GM12878 (cell line): ENCODE measurements at regions of chr7 and their contacts with region 1.

Region 1: GRCh38 chr7:34759452-34760125 is 101.6 kb downstream of the NPSR1 start:
- DNase-seq: no peak
- ATAC-seq: no peak
- H3K4me3 ChIP-seq: no peak overlapping the region
- H3K27ac ChIP-seq: no peak overlapping the region
- H3K4me1 ChIP-seq: no peaks in the 10 kb centered on the region
- H3K27me3 ChIP-seq: no peaks in the 10 kb centered on the region
- CTCF ChIP-seq: peak; percentile 55 to 57 (median 56); a peak in 5 of 6 replicates
- EP300 ChIP-seq: no peak
- POLR2A ChIP-seq: no peak
- RAD21 ChIP-seq: peak; percentile 32; the same call in 1 of the 2 replicates

Region 2: DNA sequence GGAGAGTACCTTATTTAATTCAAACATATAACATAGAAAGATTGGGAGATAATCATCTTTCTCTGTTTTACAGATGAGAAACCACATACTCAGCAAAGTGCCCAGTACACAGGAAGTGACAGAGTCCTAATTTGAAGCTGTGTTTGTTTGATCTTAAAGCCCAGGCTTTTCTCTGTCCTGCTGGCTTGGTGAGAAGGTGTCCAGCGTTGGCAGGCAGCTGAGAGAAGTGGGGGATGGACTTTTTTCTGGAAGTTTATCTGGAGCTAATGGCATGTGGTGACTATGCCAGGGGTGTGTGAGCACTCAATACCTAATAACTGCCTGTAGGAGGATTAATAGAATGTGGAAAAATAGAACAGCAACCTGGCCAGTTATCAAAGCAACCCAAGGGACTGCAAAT is 40.7 kb before region 1 on chr7:
- CTCF ChIA-PET with region 1: interaction called, 9 read pairs
- POLR2A ChIA-PET with region 1: interaction called, 36 read pairs
- RAD21 ChIA-PET with region 1: interaction called, 362 read pairs
- SMC1A ChIA-PET with region 1: interaction called, 24 read pairs
- in situ Hi-C with region 1: no loop called
- intact Hi-C with region 1: no loop called
- DNase-seq: no peak
- ATAC-seq: peak; percentile 91
- H3K4me3 ChIP-seq: no peak overlapping the region
- H3K27ac ChIP-seq: no peak overlapping the region
- H3K4me1 ChIP-seq: no peaks in the 10 kb centered on the region
- H3K27me3 ChIP-seq: no peaks in the 10 kb centered on the region
- CTCF ChIP-seq: no peak
- EP300 ChIP-seq: no peak
- POLR2A ChIP-seq: no peak
- RAD21 ChIP-seq: no peak

Region 3: DNA sequence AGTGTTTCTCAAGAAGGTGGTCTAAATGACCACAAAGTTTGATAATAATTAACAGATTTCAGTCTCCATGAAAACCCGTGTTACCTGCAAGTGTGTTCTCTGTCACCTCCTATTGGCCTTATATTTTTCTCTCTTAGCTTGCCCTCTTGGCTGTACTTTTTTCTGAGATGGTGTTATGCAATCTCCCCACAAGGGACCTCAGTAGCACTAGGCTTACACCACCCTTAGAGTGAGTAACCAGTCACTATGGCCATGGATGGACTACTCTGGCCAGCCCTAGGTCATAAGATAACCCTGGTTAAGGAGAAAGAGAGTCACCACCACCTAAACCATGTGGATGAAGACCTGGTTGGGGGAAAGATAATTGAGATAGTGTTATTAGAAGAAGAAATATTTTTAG is 24.8 kb before region 1 on chr7:
- CTCF ChIA-PET with region 1: interaction called, 92 read pairs
- POLR2A ChIA-PET with region 1: interaction called, 31 read pairs
- RAD21 ChIA-PET with region 1: interaction called, 362 read pairs
- SMC1A ChIA-PET with region 1: interaction called, 107 read pairs
- in situ Hi-C with region 1: no loop called
- intact Hi-C with region 1: loop called (anchors 1 kb)
- DNase-seq: no peak
- ATAC-seq: peak; percentile 51
- H3K4me3 ChIP-seq: no peak overlapping the region
- H3K27ac ChIP-seq: no peak overlapping the region
- H3K4me1 ChIP-seq: no peaks in the 10 kb centered on the region
- H3K27me3 ChIP-seq: no peaks in the 10 kb centered on the region
- CTCF ChIP-seq: no peak
- EP300 ChIP-seq: no peak
- POLR2A ChIP-seq: no peak
- RAD21 ChIP-seq: no peak

Region 4: DNA sequence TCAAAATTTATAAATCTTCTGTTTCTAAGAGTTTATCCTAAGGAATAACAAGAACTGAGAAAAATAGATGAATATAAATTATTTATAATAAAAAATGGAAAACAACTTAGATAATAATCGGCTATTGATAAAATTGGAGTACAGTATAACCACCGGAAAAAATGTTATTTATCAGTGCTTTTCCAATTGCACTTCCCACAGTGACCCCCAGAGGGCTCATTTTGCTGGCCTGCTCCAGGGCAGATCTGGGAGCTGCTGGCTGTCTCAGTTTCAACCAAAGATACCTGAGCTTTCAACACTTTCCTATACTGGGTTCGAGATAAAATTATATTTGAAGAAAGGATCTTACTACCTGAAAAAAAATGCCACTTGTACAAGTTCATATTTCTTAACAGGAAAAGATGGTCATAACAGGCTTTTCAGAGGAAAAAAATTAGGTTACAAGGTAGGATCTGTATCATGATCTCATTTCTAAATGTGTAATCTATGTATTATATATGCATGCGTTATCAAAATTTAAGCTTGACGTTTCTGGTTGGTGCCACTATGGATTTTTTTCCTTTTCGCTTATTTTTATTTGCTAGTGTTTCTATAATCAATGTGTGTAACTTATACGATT is 64.2 kb after region 1 on chr7:
- CTCF ChIA-PET with region 1: interaction called, 11 read pairs
- POLR2A ChIA-PET with region 1: no interaction called
- RAD21 ChIA-PET with region 1: interaction called, 9 read pairs
- SMC1A ChIA-PET with region 1: interaction called, 6 read pairs
- in situ Hi-C with region 1: no loop called
- intact Hi-C with region 1: loop called (anchors 2 kb)
- DNase-seq: no peak
- ATAC-seq: peak; percentile 87
- H3K4me3 ChIP-seq: no peak overlapping the region
- H3K27ac ChIP-seq: no peak overlapping the region
- H3K4me1 ChIP-seq: no peaks in the 10 kb centered on the region
- H3K27me3 ChIP-seq: no peaks in the 10 kb centered on the region
- CTCF ChIP-seq: peak; percentile 74 to 86 (median 79)
- EP300 ChIP-seq: no peak
- POLR2A ChIP-seq: no peak
- RAD21 ChIP-seq: peak; percentile 74

Region 5: GRCh38 chr7:34837801-34838201 is 78.2 kb after region 1 on chr7:
- CTCF ChIA-PET with region 1: no interaction called
- POLR2A ChIA-PET with region 1: no interaction called
- RAD21 ChIA-PET with region 1: no interaction called
- SMC1A ChIA-PET with region 1: no interaction called
- in situ Hi-C with region 1: no loop called
- intact Hi-C with region 1: no loop called
- DNase-seq: no peak
- ATAC-seq: no peak
- H3K4me3 ChIP-seq: no peak overlapping the region
- H3K27ac ChIP-seq: no peak overlapping the region
- H3K4me1 ChIP-seq: no peaks in the 10 kb centered on the region
- H3K27me3 ChIP-seq: no peaks in the 10 kb centered on the region
- CTCF ChIP-seq: no peak
- EP300 ChIP-seq: no peak
- POLR2A ChIP-seq: no peak
- RAD21 ChIP-seq: no peak

Region 6: GRCh38 chr7:35037526-35038339 is 278.1 kb after region 1 on chr7:
- CTCF ChIA-PET with region 1: interaction called, 46 read pairs
- POLR2A ChIA-PET with region 1: interaction called, 11 read pairs
- RAD21 ChIA-PET with region 1: interaction called, 68 read pairs
- SMC1A ChIA-PET with region 1: interaction called, 59 read pairs
- in situ Hi-C with region 1: no loop called
- intact Hi-C with region 1: loop called (anchors 2 kb)
- DNase-seq: no peak
- ATAC-seq: peak; percentile 83
- H3K4me3 ChIP-seq: peak overlapping the region; percentile 87
- H3K27ac ChIP-seq: peak overlapping the region; percentile 18; the same call in 1 of the 2 replicates
- H3K4me1 ChIP-seq: peaks cover 10% of the 10 kb centered on the region
- H3K27me3 ChIP-seq: no peaks in the 10 kb centered on the region
- CTCF ChIP-seq: peak; percentile 76 to 78 (median 78)
- EP300 ChIP-seq: no peak
- POLR2A ChIP-seq: peak; percentile 56; the same call in 1 of the 2 replicates
- RAD21 ChIP-seq: peak; percentile 37